ENCODE measurements at regions of chr15 and their contacts with region 1.

Region 1: GRCh38 chr15:68783226-68784058 is 37.3 kb downstream of the ANP32A start:
- DNase-seq: peak; percentile 39 to 75
- ATAC-seq: peak; percentile 72 to 94
- H3K4me3 ChIP-seq: no peak overlapping the region
- H3K27ac ChIP-seq: no peak overlapping the region
- H3K4me1 ChIP-seq: peaks cover 10% of the 10 kb centered on the region; the same call in 1 of the 3 replicates
- CTCF ChIP-seq: peak; percentile 71
- EP300 ChIP-seq: no peak
- POLR2A ChIP-seq: no peak
- RAD21 ChIP-seq: peak; percentile 62 to 68

Region 2: GRCh38 chr15:68560501-68561113 is 222.8 kb before region 1 on chr15:
- CTCF ChIA-PET with region 1: no interaction called
- POLR2A ChIA-PET with region 1: no interaction called
- DNase-seq: no peak
- ATAC-seq: peak in 1 of 2 experiments; percentile 7; a peak in 2 of 6 replicates
- H3K4me3 ChIP-seq: no peak overlapping the region
- H3K27ac ChIP-seq: no peak overlapping the region
- H3K4me1 ChIP-seq: no peaks in the 10 kb centered on the region
- CTCF ChIP-seq: no peak
- EP300 ChIP-seq: no peak
- POLR2A ChIP-seq: no peak
- RAD21 ChIP-seq: no peak

Region 3: DNA sequence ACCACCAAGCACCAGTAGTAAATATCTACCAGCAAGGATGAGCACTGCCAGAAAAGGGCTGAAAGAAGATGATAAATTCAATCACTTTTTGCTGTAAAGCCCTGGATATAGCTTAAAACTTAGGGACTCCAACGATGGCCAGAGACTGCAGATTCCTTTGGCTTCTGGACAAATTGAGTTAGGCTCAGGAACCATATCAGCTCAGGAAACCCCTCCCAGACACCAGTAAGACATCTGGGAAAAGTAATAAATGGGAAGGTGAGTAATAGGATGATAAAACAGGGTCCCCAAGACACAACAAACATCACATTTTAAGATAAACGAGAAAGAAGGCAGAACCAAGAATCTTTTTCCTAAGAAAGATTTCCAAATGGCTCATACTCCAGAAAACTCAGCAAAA is 27.7 kb before region 1 on chr15:
- CTCF ChIA-PET with region 1: no interaction called
- POLR2A ChIA-PET with region 1: no interaction called
- DNase-seq: no peak
- ATAC-seq: no peak
- H3K4me3 ChIP-seq: no peak overlapping the region
- H3K27ac ChIP-seq: no peak overlapping the region
- H3K4me1 ChIP-seq: no peaks in the 10 kb centered on the region
- CTCF ChIP-seq: no peak
- EP300 ChIP-seq: no peak
- POLR2A ChIP-seq: no peak
- RAD21 ChIP-seq: no peak

Region 4: GRCh38 chr15:68795298-68795848 is 11.9 kb after region 1 on chr15:
- CTCF ChIA-PET with region 1: interaction called, 36 read pairs
- POLR2A ChIA-PET with region 1: no interaction called
- DNase-seq: no peak
- ATAC-seq: no peak
- H3K4me3 ChIP-seq: no peak overlapping the region
- H3K27ac ChIP-seq: no peak overlapping the region
- H3K4me1 ChIP-seq: peaks cover 26% of the 10 kb centered on the region; the same call in 1 of the 3 replicates
- CTCF ChIP-seq: no peak
- EP300 ChIP-seq: no peak
- POLR2A ChIP-seq: no peak
- RAD21 ChIP-seq: no peak

Region 5: DNA sequence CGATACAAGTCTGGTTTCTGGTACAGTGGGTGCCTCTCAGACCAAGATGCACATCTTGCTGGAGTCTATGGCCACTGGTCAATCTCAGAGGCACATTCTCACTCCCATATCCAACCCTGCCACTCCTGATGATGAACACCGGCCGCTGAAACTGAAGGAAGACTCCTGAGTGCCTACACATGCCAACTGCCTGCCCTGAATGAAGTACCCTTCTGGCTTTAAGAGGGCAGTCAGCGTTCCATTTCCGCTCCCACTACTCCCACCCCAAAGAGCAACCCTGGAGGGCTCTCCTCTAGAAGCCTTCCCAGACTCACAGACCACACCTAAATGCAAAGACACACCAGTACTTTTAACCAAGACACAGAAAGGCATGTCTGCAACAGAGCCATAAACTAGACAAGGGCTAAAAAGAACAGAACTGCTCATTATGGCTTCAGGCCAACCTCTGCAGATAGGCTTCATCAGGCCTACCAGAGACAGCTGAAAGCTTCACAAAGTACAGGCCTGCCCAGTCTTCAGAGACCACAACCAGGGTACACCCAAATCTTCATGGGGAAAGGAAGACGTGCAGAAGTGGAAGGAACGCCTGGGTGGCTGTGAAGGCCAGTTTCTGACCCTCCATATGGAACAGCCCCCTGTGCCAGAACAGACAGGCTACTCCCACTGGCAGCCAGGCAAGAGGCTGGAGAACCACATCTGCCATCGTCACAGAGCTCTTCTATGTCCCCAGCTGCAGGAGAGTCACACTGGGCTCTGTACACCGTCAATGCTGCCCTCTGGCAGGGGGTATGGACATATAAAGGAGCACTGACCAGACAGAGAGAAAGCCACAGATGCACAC is 23.0 kb after region 1 on chr15:
- CTCF ChIA-PET with region 1: interaction called, 12 read pairs
- POLR2A ChIA-PET with region 1: no interaction called
- DNase-seq: no peak
- ATAC-seq: peak; percentile 40 to 42; a peak in 3 of 6 replicates
- H3K4me3 ChIP-seq: no peak overlapping the region
- H3K27ac ChIP-seq: no peak overlapping the region
- H3K4me1 ChIP-seq: 0 out of 3 replicates have a peak, but pooled peaks cover 6% of the 10 kb centered on the region
- CTCF ChIP-seq: no peak
- EP300 ChIP-seq: no peak
- POLR2A ChIP-seq: no peak
- RAD21 ChIP-seq: no peak

Region 6: GRCh38 chr15:68817304-68818065 is 34.0 kb after region 1 on chr15:
- CTCF ChIA-PET with region 1: interaction called, 12 read pairs
- POLR2A ChIA-PET with region 1: interaction called, 4 read pairs
- DNase-seq: peak; percentile 60 to 73
- ATAC-seq: peak; percentile 15 to 36; a peak in 3 of 6 replicates
- H3K4me3 ChIP-seq: peak overlapping the region; percentile 74
- H3K27ac ChIP-seq: peak overlapping the region; percentile 98 to 99
- H3K4me1 ChIP-seq: peaks cover 45% of the 10 kb centered on the region
- CTCF ChIP-seq: no peak
- EP300 ChIP-seq: no peak
- POLR2A ChIP-seq: peak; percentile 19; the same call in 1 of the 2 replicates
- RAD21 ChIP-seq: 0 out of 5 replicates have a peak, but pooled peaks of 1 of the 2 experiments have one; percentile 12